Sciatic nerve (tissue), 2 donors: ENCODE measurements at regions of chr17 and their contacts with region 1.

Region 1: DNA sequence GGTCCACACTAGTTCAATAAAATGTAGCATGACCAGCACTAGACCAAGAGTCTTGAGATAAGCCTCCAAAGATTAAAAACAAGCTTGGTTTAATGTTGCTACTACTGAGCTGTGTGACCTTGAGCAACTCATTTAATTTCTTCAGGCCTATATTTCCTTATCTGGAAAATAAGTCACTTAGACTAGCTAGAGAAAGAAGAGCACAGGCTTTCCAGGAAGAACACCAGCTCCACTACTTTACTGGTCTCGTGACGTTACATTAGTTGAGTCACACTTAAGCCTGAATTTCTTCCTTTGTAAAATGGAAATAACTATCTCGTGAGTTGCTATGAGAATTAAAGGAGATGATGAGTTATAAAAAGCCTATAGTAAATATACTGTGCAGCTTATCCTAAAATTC is 5.4 kb downstream of the HELZ start:
- DNase-seq: no peak
- ATAC-seq: peak; percentile 20

Region 2: DNA sequence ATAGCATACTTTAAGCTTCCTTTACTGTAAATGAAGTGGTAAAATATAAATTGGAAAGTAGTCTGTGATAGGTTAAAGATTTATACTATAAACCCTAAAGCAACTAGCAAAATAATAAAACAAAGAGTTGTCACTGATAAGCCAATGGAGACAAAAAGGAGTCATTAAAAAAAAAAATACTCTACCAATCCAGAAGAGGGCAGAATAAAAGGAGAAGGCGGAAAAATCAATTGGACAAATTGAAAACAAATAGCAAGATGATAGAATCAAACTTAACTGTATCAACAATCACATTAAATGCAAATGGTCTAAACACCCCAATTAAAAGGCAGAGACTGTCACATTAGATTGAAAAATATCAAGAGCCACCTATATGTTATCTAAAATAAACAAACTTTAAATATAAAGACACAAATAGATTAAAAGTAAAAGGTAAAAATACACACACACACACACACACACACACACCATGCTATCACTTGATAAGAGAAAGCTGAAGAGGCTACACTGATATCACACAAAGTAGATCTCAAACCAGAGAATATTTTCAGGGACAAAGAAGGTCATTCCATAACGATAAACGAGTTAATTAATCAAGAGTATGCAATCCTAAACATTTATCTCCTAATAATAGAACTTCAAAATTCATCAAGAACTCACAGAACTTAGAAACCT is 123.4 kb before region 1 on chr17:
- intact Hi-C with region 1: no loop called
- DNase-seq: no peak
- ATAC-seq: no peak

Region 3: GRCh38 chr17:67270416-67270815 is 30.8 kb after region 1 on chr17:
- intact Hi-C with region 1: loop called (anchors 1 kb)
- DNase-seq: no peak
- ATAC-seq: no peak

Region 4: DNA sequence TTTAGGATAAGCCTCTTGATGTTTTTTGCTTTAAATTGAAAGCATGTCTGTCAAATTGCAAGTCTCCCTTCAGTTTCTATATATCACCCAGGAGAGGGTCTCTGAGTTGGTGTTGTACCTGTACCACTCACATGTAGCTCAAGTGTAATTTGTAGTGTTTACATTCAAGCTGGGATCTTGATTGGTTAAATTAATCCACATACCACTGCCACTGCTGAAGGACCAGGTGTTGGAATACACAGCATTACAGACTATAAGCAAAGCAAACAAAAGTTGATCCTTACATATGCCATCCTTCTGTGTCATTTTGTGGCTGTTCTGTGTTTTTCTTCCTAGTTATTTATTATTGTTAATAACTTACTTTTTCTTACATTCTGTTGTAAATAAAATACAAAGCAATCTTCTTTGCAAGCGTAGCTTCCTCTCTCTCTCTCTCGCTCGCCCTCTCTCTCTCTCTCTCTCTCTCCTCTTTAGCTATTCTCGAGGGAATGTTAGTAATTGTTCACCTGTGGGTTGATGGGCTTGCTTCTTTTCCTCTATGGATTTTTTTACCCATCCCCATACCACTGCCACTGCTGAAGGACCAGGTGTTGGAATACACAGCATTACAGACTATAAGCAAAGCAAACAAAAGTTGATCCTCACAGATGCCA is 457.4 kb after region 1 on chr17:
- intact Hi-C with region 1: no loop called
- DNase-seq: no peak
- ATAC-seq: no peak